Mammary epithelial cell (primary cell): ENCODE measurements at regions of chr1 and their contacts with region 1.

Region 1: GRCh38 chr1:92960395-92961130 is 699 bp downstream of the DIPK1A start:
- DNase-seq: peak; percentile 81
- H3K4me3 ChIP-seq: peak overlapping the region; percentile 62 to 70 (median 67)
- H3K27ac ChIP-seq: peak overlapping the region; percentile 80
- H3K4me1 ChIP-seq: peaks cover 15% of the 10 kb centered on the region
- H3K27me3 ChIP-seq: no peaks in the 10 kb centered on the region
- CTCF ChIP-seq: peak; percentile 60 to 85

Region 2: GRCh38 chr1:92886886-92887419 is 73.6 kb before region 1 on chr1:
- CTCF ChIA-PET with region 1: no interaction called
- dilution Hi-C with region 1: loop called (anchors 5 kb)
- in situ Hi-C with region 1: no loop called
- intact Hi-C with region 1: no loop called
- DNase-seq: no peak
- H3K4me3 ChIP-seq: no peak overlapping the region
- H3K27ac ChIP-seq: no peak overlapping the region
- H3K4me1 ChIP-seq: peaks cover 6% of the 10 kb centered on the region
- H3K27me3 ChIP-seq: no peaks in the 10 kb centered on the region
- CTCF ChIP-seq: no peak

Region 3: GRCh38 chr1:92994105-92994712 is 33.6 kb after region 1 on chr1:
- CTCF ChIA-PET with region 1: interaction called, 10 read pairs
- dilution Hi-C with region 1: no loop called
- in situ Hi-C with region 1: no loop called
- intact Hi-C with region 1: loop called (anchors 1 kb)
- DNase-seq: peak; percentile 50
- H3K4me3 ChIP-seq: no peak overlapping the region
- H3K27ac ChIP-seq: no peak overlapping the region
- H3K4me1 ChIP-seq: peaks cover 6% of the 10 kb centered on the region
- H3K27me3 ChIP-seq: no peaks in the 10 kb centered on the region
- CTCF ChIP-seq: peak; percentile 70 to 80

Region 4: GRCh38 chr1:93288558-93288957 is 328.0 kb after region 1 on chr1:
- CTCF ChIA-PET with region 1: no interaction called
- dilution Hi-C with region 1: no loop called
- in situ Hi-C with region 1: no loop called
- intact Hi-C with region 1: no loop called
- DNase-seq: no peak
- H3K4me3 ChIP-seq: no peak overlapping the region
- H3K27ac ChIP-seq: no peak overlapping the region
- H3K4me1 ChIP-seq: no peaks in the 10 kb centered on the region
- H3K27me3 ChIP-seq: no peaks in the 10 kb centered on the region
- CTCF ChIP-seq: no peak